ENCODE measurements at regions of chr10 and their contacts with region 1.

Region 1: DNA sequence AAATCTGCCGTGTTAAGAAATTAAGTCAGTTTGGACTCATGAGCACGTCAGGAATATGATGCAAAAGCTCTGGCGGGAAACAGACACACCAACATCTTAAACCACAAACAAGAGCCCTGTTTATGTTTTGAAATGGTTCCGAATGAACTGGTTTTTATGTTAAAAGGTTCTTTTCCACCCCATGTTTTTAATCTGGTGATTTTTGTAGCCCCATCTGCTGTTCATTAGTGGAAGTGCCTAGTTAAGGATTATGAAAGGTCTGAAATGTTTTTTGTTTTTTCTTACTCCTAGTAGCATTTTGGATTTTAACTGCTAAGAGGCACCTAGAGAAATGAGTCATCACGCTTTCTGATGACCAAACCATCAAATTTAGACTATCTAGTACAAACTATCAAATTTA is 404.1 kb upstream of the MKI67 start:
- DNase-seq: no peak
- H3K4me3 Mint-ChIP-seq: no peak overlapping the region
- H3K27ac Mint-ChIP-seq: no peak overlapping the region
- H3K4me1 Mint-ChIP-seq: no peaks in the 10 kb centered on the region
- H3K27me3 Mint-ChIP-seq: peaks cover 3% of the 10 kb centered on the region

Region 2: DNA sequence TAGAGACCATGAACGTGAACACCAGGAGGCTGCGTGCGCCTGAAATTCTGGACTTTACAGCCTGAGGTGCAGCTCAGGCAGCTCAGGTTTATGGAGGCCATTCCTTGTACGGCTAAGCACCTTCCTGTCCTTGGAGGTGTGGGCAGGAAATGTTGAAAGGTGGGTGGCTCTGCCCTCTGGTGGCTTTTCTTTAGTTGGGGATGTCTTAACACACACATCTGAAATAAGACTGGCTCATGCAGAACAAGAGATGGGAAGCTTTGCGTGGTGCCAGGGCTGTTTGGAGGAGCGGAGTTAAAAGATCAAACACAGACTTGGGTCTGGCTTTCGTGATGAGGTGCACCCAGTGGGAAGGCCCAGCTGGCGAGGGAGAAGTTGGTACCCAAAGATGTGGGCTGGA is 1561.0 kb before region 1 on chr10:
- intact Hi-C with region 1: no loop called
- DNase-seq: no peak
- H3K4me3 Mint-ChIP-seq: no peak overlapping the region
- H3K27ac Mint-ChIP-seq: no peak overlapping the region
- H3K4me1 Mint-ChIP-seq: no peaks in the 10 kb centered on the region
- H3K27me3 Mint-ChIP-seq: no peaks in the 10 kb centered on the region

Region 3: GRCh38 chr10:128268015-128268722 is 262.1 kb before region 1 on chr10:
- intact Hi-C with region 1: loop called (anchors 5 kb)
- DNase-seq: no peak
- H3K4me3 Mint-ChIP-seq: no peak overlapping the region
- H3K27ac Mint-ChIP-seq: no peak overlapping the region
- H3K4me1 Mint-ChIP-seq: no peaks in the 10 kb centered on the region
- H3K27me3 Mint-ChIP-seq: peaks cover 41% of the 10 kb centered on the region

Region 4: GRCh38 chr10:128386816-128387604 is 143.3 kb before region 1 on chr10:
- intact Hi-C with region 1: no loop called
- DNase-seq: no peak
- H3K4me3 Mint-ChIP-seq: no peak overlapping the region
- H3K27ac Mint-ChIP-seq: no peak overlapping the region
- H3K4me1 Mint-ChIP-seq: no peaks in the 10 kb centered on the region
- H3K27me3 Mint-ChIP-seq: no peaks in the 10 kb centered on the region